ENCODE measurements at regions of chr10 and their contacts with region 1.

Region 1: DNA sequence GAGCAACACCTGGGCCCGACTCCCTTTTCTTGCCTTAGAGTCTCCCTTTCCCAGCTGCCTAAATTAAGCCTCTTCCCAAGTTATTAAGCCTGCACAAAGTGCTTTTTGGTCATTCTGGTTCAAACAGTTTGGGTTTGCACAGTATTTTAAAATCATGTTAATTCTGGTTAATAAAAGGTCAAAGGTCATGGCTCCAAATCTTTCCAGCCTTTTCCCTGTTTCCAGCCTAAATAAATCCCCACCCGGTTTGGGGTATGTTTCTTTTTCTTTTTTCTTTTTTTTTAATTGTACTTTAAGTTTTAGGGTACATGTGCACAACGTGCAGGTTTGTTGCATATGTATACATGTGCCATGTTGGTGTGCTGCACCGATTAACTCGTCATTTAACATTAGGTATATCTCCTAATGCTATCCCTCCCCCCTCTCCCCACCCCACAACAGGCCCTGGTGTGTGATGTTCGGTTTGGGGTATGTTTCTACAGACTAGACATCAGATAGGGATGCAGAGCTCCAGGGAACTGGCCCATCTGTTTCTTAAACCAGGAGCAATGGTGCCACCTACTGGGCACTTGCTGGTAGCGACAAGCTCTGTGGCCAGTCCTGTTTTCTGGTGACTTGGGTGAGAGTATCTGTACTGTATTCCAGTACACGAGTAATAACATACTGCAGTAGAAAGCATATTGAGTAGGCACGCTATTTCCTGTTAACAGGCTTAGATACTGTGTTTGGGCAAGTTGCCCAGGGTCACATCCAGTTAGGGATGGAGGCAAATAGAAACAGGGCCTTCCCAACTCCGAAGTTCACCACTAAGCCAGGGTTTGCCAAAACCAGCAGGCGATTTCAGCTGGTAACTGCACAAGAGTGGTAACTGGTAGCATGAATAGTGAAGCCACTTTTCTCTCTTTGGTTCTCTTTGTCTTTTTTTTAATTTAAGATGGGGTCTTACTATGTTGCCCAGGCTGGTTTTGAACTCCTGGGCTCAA is 60.6 kb upstream of the TRIM8 start:
- DNase-seq: peak; percentile 88 to 93 (median 90)
- ATAC-seq: peak; percentile 92
- H3K4me3 ChIP-seq: no peak overlapping the region
- H3K27ac ChIP-seq: peak overlapping the region in 1 of 4 donors; percentile 6
- H3K4me1 ChIP-seq: no peaks in the 10 kb centered on the region
- H3K27me3 ChIP-seq: no peaks in the 10 kb centered on the region
- CTCF ChIP-seq: peak; percentile 75 to 84 (median 82)
- POLR2A ChIP-seq: no peak

Region 2: DNA sequence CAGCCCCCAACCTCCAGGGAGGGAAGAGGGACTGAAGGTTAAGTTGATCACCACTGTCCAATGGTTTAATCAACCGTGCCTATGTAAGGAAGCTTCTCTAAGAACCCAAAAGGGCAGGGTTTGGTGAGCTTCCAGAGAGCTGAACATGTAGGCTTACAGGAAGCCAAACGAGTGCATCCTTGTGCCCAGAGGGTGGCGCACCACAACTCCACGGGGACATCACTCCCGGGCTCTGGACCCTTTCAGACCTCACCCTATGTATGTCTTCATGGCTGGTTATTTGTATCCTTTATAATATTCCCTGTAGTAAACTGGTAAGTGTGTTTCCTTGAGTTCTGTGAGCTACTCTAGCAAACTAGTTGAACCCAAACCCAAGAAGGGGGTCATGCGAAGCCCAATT is 199.7 kb before region 1 on chr10:
- intact Hi-C with region 1: loop called (anchors 10 kb)
- DNase-seq: no peak
- ATAC-seq: no peak
- H3K4me3 ChIP-seq: no peak overlapping the region
- H3K27ac ChIP-seq: no peak overlapping the region
- H3K4me1 ChIP-seq: no peaks in the 10 kb centered on the region
- H3K27me3 ChIP-seq: no peaks in the 10 kb centered on the region
- CTCF ChIP-seq: no peak
- POLR2A ChIP-seq: no peak

Region 3: DNA sequence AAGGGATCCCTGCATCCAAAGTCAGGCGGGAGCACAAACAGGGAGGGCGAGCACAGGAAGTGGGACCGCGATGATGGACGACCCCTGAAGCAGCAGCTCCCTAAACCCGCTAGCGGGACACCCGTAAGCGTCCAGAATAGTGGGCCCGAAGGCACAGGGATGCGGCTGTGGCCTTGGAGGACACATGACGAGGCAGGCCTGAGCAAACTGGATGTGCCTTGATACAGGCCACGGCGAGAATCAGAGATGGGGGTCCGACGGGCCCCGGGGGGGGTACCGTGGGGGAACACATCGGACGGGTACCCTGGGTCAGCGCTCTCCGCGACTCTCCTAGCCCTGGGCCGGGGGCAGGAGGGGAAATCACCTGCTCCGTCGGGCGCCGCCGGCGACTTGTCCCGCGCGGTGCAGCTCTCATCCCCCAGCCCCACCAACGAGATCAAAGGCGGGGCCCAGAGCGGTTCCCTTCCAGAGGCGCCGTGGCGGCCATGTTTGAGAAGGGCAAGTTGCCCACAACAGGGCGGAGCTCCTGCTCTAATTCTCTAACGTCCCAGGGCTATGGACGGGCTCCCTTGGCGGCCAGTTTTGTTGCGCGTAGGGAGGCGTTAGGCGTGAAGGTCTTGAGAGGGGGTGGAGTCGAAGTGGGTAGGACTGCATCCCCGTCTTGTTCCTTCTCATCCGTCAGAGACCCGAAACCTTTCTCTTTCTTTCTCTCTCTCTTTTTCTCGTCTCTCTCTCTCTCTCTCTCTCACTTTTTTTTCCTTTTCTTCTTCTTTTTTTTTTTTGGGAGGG is 151.4 kb before region 1 on chr10 and contains the start of gene CUEDC2:
- intact Hi-C with region 1: no loop called
- DNase-seq: peak; percentile 96 to 97 (median 96)
- ATAC-seq: peak; percentile 98
- H3K4me3 ChIP-seq: peak within 1 kb of the TSS; percentile 42 to 79
- H3K27ac ChIP-seq: peak within 1 kb of the TSS; percentile 60 to 76 (median 70)
- H3K4me1 ChIP-seq: peaks cover 15% of the 10 kb centered on the region
- H3K27me3 ChIP-seq: no peaks in the 10 kb centered on the region
- CTCF ChIP-seq: peak in 1 of 7 experiments; percentile 26
- POLR2A ChIP-seq: peak in 2 of 3 donors; percentile 61 to 67
- total RNA-seq, gene CUEDC2: 30.3 to 35.5 TPM

Region 4: DNA sequence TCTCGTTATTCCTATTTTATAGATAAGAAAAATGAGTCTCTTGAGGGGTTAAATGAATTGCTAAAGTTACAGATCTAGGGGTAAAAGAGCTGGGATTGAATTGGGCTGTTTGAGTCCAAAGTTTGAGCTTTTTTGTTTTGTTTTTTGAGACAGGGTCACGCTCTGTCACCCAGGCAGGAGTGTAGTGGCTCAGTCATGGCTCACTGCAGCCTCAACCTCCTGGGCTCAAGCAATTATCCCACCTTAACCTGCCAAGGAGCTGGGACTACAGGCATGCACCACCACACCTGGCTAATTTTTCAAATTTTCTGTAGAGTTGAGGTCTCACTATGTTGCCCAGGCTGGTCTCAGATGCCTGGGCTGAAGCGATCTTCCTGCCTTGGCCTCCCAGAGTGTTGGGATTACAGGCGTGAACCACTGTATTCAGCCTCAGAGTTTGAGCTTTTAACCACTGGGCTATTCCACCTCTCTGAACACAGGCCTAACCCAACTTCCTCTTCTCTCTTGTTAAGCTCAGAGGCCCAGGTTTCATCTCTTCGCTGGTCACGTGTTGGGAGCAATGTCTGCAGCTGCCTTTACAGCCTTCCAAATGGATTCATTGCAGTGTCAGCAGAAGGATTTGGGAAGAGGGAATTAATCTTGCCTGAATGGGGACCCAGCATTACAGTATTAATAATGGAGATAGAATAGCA is 72.0 kb before region 1 on chr10:
- intact Hi-C with region 1: loop called (anchors 10 kb)
- DNase-seq: peak in 1 of 4 donors; percentile 6
- ATAC-seq: no peak
- H3K4me3 ChIP-seq: no peak overlapping the region
- H3K27ac ChIP-seq: no peak overlapping the region
- H3K4me1 ChIP-seq: peaks cover 13% of the 10 kb centered on the region
- H3K27me3 ChIP-seq: no peaks in the 10 kb centered on the region
- CTCF ChIP-seq: no peak
- POLR2A ChIP-seq: no peak

Region 5: GRCh38 chr10:102555781-102556328 is 27.9 kb before region 1 on chr10:
- intact Hi-C with region 1: no loop called
- DNase-seq: no peak
- ATAC-seq: no peak
- H3K4me3 ChIP-seq: no peak overlapping the region
- H3K27ac ChIP-seq: no peak overlapping the region
- H3K4me1 ChIP-seq: no peaks in the 10 kb centered on the region
- H3K27me3 ChIP-seq: no peaks in the 10 kb centered on the region
- CTCF ChIP-seq: no peak
- POLR2A ChIP-seq: no peak

Region 6: GRCh38 chr10:102962259-102962658 is 378.5 kb after region 1 on chr10:
- intact Hi-C with region 1: no loop called
- DNase-seq: no peak
- ATAC-seq: no peak
- H3K4me3 ChIP-seq: no peak overlapping the region
- H3K27ac ChIP-seq: no peak overlapping the region
- H3K4me1 ChIP-seq: peaks cover 14% of the 10 kb centered on the region
- H3K27me3 ChIP-seq: no peaks in the 10 kb centered on the region
- CTCF ChIP-seq: no peak
- POLR2A ChIP-seq: no peak

Region 7: DNA sequence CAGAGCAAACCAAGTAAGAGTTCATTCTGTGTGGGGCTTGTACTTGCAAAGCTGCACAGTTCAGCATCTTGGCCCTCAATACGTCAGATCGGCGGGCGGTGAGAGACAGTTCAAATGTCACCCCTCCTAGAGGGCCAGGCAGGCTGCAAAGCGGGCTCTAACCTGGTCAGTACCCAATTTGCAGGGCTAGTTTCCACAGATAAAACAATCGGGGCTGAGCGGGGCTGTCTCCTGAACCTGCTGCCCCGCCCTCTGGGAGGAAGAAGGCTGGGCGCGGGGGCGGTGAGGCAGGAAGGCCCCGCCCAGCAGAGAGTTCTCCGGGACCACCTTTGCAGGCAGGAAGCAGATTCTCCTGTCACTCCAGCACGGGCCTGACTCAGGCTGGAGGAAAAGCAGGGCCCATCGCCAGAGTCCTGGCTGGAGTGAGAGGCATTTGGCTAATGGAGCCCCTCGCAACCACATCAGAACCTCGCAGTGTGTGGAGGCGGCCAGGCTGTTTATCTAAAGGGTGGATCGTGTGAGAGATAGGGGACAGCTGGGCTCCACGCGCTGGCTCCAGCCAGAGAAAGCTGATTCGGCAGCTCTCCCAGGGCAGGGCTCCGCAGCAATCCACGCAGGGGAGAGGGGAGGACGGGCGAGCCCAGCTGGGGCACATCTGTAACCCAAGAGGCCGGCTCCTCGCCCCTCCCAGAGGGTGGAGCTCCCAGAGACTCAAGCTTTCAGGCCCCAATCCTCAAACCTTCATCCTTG is 1188.5 kb after region 1 on chr10:
- intact Hi-C with region 1: no loop called
- DNase-seq: peak; percentile 49 to 74 (median 68)
- ATAC-seq: peak; percentile 70
- H3K4me3 ChIP-seq: peak overlapping the region in 1 of 2 donors; percentile 11
- H3K27ac ChIP-seq: peak overlapping the region in 3 of 4 donors; percentile 49 to 59 (median 52)
- H3K4me1 ChIP-seq: peaks cover 16% of the 10 kb centered on the region
- H3K27me3 ChIP-seq: no peaks in the 10 kb centered on the region
- CTCF ChIP-seq: no peak
- POLR2A ChIP-seq: peak in 2 of 3 donors; percentile 32 to 52